Gastrocnemius medialis (tissue), 4 donors: ENCODE measurements at regions of chr17 and their contacts with region 1.

Region 1: DNA sequence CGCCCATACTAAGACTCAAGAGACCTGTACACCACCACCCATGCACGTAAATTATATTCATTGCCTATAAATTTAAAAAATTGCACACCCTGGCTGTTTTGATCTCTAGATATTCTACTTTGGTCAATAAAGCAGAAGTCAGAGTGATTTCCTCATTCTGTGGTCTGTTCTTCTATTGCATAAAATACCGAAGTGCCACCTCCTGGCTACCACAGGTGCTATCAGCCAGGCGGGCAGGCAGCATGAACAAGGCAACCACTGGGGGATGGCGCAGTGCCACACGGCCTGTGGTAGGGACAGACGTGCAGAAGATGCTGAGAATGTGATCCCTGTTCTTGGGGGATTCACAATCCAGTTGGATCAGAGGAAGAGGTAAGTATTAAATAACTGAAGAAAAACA is 122.3 kb downstream of the CDK5R1 start:
- DNase-seq: peak; percentile 36 to 52
- ATAC-seq: peak in 1 of 2 donors; percentile 73
- H3K4me3 ChIP-seq: no peak overlapping the region
- H3K27ac ChIP-seq: no peak overlapping the region
- H3K4me1 ChIP-seq: no peaks in the 10 kb centered on the region
- H3K27me3 ChIP-seq: no peaks in the 10 kb centered on the region
- CTCF ChIP-seq: peak in 4 of 5 experiments; percentile 17 to 44 (median 31)
- POLR2A ChIP-seq: no peak

Region 2: GRCh38 chr17:32479074-32479617 is 129.9 kb before region 1 on chr17:
- in situ Hi-C with region 1: loop called in 1 of 4 experiments (anchors 10 kb)
- intact Hi-C with region 1: no loop called
- DNase-seq: peak; percentile 55 to 79
- ATAC-seq: peak; percentile 86 to 87
- H3K4me3 ChIP-seq: no peak overlapping the region
- H3K27ac ChIP-seq: peak overlapping the region; percentile 48 to 66 (median 64)
- H3K4me1 ChIP-seq: peaks cover 6 to 10% of the 10 kb centered on the region in 2 donors
- H3K27me3 ChIP-seq: no peaks in the 10 kb centered on the region
- CTCF ChIP-seq: no peak
- POLR2A ChIP-seq: no peak

Region 3: DNA sequence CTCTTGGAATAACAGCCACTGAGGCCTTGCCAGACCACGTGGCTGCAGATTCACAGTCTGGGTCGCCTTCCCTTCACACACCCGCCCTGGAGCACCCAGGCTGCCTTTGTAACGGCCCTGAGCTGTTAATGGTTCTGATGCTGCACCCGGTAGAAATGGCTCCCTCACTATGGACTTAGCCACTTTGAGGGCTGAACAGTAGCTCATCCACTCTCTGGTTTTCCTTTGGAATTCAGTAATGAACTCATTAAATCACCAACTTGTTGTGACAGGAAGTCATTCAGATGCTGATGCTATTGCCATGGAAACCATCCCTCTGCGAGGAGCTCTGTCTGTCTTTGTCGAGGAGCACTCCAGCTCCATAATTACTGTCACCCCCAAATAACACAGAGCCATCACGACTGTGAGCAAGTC is 63.0 kb before region 1 on chr17:
- in situ Hi-C with region 1: loop called in 1 of 4 experiments (anchors 10 kb)
- intact Hi-C with region 1: no loop called
- DNase-seq: no peak
- ATAC-seq: no peak
- H3K4me3 ChIP-seq: no peak overlapping the region
- H3K27ac ChIP-seq: no peak overlapping the region
- H3K4me1 ChIP-seq: no peaks in the 10 kb centered on the region
- H3K27me3 ChIP-seq: no peaks in the 10 kb centered on the region
- CTCF ChIP-seq: no peak
- POLR2A ChIP-seq: no peak